Head of caudate nucleus (tissue), 42 donors: ENCODE measurements at regions of chr22 and their contacts with region 1.

Region 1: GRCh38 chr22:37807410-37808293 is at the start of gene GCAT:
- DNase-seq: peak; percentile 87 to 98 (median 95)

Region 2: DNA sequence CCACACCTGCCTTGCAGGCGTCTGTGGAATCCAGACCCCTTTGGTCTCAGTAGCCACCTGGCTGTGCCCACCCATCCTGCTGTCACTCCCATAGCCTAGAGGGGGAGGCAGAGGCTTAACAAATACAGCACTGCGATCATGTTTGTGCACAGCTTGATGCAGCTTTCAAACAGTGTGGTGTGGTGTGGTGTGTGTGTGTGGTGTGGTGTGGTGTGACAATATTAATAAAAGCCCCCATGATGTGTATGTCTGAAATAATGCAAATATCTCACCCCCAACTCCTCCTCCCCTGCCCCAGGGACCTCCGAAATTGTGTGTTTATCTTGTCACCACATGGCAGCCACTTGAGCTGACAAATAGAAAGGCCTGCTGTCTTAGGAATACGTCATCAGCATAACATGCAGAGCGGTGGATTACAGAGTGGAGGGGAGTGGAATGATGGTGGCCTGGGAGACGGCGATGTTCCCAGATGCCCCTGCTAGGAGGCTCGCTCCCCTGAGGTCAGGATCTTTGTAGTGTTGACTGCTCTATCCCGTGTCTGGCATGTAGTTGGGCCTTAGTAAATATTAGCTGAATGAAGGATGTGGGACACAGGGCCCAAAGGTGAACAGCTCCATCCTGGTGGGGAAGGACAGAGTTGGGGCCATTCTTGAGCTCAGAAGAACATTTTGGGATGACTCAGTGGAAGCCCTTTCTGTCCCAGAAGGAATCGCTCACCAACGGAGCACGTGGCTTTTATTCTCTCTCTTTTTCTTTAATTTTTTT is 146.3 kb before region 1 on chr22:
- intact Hi-C with region 1: loop called (anchors 10 kb)
- DNase-seq: peak in 26 of 42 donors; percentile 24 to 74 (median 48)

Region 3: GRCh38 chr22:37849089-37849751 is 41.6 kb after region 1 on chr22 and contains the start of gene EIF3L:
- intact Hi-C with region 1: loop called (anchors 5 kb)
- DNase-seq: peak; percentile 85 to 98 (median 94)